ENCODE measurements at regions of chr3 and their contacts with region 1.

Region 1: DNA sequence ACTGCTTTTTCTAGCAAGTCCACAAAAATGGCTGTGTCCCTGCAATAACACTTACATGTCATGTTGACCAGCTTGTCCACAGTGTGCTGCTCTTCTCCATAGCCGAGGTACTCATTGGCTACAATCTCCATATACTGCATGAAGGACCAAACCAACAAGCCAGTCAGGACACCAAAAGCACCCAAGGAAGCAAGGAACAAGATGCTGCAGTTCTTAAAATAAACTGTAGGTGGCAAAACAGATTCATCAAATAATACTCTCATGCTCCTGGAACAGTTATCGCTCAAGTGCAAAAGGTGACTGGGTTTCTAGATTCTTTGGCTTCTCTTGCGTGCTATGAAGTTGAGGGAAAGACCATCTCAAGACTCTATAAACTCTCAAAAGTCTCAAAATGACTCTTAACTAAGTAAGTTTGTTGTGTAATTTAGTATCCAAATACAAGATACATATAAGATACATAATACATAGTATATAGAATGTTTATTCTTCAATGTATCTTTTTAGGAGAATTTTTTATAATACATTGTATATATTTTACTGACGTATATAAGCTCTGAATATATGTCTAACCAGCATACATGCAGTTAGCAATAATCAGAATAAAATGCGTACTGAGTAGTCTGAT is 57.0 kb downstream of the NEK10 start:
- DNase-seq: no peak
- ATAC-seq: peak; percentile 78

Region 2: GRCh38 chr3:27467545-27467944 is 155.4 kb after region 1 on chr3:
- intact Hi-C with region 1: loop called (anchors 5 kb)
- DNase-seq: no peak
- ATAC-seq: peak; percentile 70

Region 3: DNA sequence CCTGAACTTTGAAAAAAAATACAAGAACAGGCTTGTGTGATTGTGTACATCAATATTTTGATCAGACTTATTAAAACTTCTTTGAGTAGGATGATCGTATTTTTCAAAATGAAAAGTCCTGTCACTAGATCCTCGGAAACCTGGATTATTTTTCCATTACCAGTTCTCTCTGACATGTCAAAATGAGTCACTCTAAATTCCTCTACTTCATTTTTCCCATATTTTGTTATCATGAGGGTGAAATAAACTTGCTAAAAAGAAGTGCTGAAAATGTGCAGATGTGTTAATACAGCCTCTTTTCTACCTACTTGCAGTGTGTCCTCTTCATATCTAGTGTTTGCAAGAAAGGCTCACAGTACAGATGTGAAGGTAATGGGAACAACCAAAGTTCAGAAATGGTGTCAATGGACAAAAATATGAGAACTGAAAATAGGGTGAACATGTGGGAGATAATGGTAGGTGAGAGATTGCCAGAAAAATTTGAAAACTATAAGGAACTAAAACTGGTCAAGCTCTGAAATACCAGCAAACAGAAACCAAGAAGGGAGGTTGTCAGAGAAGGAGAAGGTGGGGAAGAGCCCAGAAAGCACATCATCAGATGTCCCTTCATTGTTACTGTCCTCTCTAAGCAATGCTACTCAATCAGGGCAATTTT is 301.8 kb after region 1 on chr3:
- intact Hi-C with region 1: no loop called
- DNase-seq: no peak
- ATAC-seq: no peak

Region 4: GRCh38 chr3:27659279-27660021 is 347.3 kb after region 1 on chr3:
- intact Hi-C with region 1: no loop called
- DNase-seq: peak; percentile 78
- ATAC-seq: peak; percentile 68

Measured in left ventricle myocardium superior (tissue), 1 donor.